ENCODE measurements at regions of chr1 and their contacts with region 1.

Region 1: DNA sequence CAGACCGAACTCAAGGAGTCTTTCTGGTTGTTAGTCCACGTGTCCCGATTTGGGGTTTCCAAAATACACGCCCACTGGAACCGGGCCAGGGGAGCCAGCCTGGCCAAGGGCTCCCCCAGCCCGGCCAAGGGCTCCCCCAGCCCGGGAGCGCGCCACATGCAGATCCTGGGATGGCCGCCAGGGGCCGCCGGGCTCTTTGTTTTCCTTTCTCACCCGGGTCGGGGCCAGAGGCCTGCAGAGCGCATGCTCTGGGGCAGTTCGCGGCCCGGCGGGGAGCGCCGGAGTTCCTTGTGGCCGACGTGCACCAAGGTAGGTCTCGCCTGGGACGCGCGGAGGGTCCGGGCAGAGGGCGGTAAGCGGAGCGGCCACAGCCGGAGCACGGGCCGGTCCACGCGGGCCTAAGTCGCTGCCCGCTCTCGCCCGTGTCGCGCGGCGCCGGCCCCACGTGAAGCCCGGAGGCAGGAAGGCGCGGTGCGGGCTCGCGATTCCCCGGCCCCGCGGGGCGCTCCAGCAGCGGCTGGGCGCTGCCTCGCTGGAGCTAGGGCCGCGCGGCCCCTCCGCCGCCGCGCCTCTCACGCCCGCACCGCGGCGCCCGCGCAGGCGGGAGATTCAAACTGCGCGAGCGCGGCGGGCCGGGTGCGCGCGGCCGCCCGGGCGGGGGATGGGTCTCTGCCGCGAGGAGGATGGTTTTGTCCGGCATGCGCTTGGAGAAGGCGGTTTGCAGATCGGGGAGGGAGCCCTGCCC is 12.3 kb downstream of the RCC1 start:
- DNase-seq: peak; percentile 85
- H3K4me3 ChIP-seq: peak overlapping the region; percentile 60 to 68 (median 61)
- H3K27ac ChIP-seq: peak overlapping the region; percentile 57
- H3K4me1 ChIP-seq: peaks cover 12% of the 10 kb centered on the region
- H3K27me3 ChIP-seq: no peaks in the 10 kb centered on the region
- CTCF ChIP-seq: peak; percentile 63 to 98

Region 2: DNA sequence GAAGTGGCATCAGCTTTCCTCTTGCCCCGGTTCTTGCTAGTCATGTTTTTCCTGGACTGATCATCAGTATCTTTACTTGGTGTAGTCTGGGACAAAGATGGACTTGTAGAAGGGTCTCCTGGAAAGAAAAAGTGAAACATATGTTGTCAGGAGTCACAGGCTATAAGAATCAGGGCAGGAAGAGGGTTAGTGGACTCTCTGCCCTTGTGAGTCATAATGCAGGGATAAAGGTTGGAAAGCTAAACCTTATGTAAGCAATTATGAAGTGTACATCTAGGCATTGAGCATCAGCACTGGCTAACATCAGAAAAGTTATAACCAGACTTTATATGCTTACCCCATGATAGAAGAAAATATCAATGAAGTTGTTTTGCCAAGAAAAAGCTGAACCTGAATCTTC is 507.2 kb before region 1 on chr1:
- CTCF ChIA-PET with region 1: no interaction called
- dilution Hi-C with region 1: no loop called
- in situ Hi-C with region 1: no loop called
- intact Hi-C with region 1: no loop called
- DNase-seq: no peak
- H3K4me3 ChIP-seq: no peak overlapping the region
- H3K27ac ChIP-seq: no peak overlapping the region
- H3K4me1 ChIP-seq: no peaks in the 10 kb centered on the region
- H3K27me3 ChIP-seq: no peaks in the 10 kb centered on the region
- CTCF ChIP-seq: no peak

Region 3: GRCh38 chr1:28540651-28541050 is 22.5 kb after region 1 on chr1:
- CTCF ChIA-PET with region 1: interaction called, 14 read pairs
- dilution Hi-C with region 1: no loop called
- in situ Hi-C with region 1: no loop called
- intact Hi-C with region 1: no loop called
- DNase-seq: no peak
- H3K4me3 ChIP-seq: no peak overlapping the region
- H3K27ac ChIP-seq: no peak overlapping the region
- H3K4me1 ChIP-seq: no peaks in the 10 kb centered on the region
- H3K27me3 ChIP-seq: no peaks in the 10 kb centered on the region
- CTCF ChIP-seq: peak in 1 of 2 donors; percentile 8

Region 4: GRCh38 chr1:28552758-28553663 is 34.8 kb after region 1 on chr1 and contains the start of gene TRNAU1AP:
- CTCF ChIA-PET with region 1: no interaction called
- dilution Hi-C with region 1: no loop called
- in situ Hi-C with region 1: loop called in 1 of 2 experiments (anchors 5 kb)
- intact Hi-C with region 1: loop called (anchors 2 kb)
- DNase-seq: peak; percentile 96
- H3K4me3 ChIP-seq: peak within 1 kb of the TSS; percentile 77 to 88 (median 78)
- H3K27ac ChIP-seq: peak within 1 kb of the TSS; percentile 84
- H3K4me1 ChIP-seq: no peaks in the 10 kb centered on the region
- H3K27me3 ChIP-seq: no peaks in the 10 kb centered on the region
- CTCF ChIP-seq: no peak
- total RNA-seq, gene TRNAU1AP: 21.3 to 36.9 TPM

Region 5: GRCh38 chr1:28565040-28565439 is 46.9 kb after region 1 on chr1:
- CTCF ChIA-PET with region 1: no interaction called
- dilution Hi-C with region 1: no loop called
- in situ Hi-C with region 1: no loop called
- intact Hi-C with region 1: no loop called
- DNase-seq: no peak
- H3K4me3 ChIP-seq: no peak overlapping the region
- H3K27ac ChIP-seq: no peak overlapping the region
- H3K4me1 ChIP-seq: no peaks in the 10 kb centered on the region
- H3K27me3 ChIP-seq: no peaks in the 10 kb centered on the region
- CTCF ChIP-seq: no peak

Region 6: GRCh38 chr1:28581536-28582247 is 63.5 kb after region 1 on chr1:
- CTCF ChIA-PET with region 1: no interaction called
- dilution Hi-C with region 1: no loop called
- in situ Hi-C with region 1: no loop called
- intact Hi-C with region 1: loop called (anchors 1 kb)
- DNase-seq: peak; percentile 95
- H3K4me3 ChIP-seq: peak overlapping the region; percentile 73 to 96 (median 88)
- H3K27ac ChIP-seq: peak overlapping the region; percentile 87
- H3K4me1 ChIP-seq: peaks cover 23% of the 10 kb centered on the region
- H3K27me3 ChIP-seq: no peaks in the 10 kb centered on the region
- CTCF ChIP-seq: peak in 1 of 2 donors; percentile 2

Measured in mammary epithelial cell (primary cell).